Activated CD8-positive, alpha-beta memory T cell treated with anti-CD3 and anti-CD28 coated beads, Interleukin-2, amount 10 ng/mL, durations not matched to agents 7 days and 5 days (primary cell): ENCODE measurements at regions of chr12 and their contacts with region 1.

Region 1: DNA sequence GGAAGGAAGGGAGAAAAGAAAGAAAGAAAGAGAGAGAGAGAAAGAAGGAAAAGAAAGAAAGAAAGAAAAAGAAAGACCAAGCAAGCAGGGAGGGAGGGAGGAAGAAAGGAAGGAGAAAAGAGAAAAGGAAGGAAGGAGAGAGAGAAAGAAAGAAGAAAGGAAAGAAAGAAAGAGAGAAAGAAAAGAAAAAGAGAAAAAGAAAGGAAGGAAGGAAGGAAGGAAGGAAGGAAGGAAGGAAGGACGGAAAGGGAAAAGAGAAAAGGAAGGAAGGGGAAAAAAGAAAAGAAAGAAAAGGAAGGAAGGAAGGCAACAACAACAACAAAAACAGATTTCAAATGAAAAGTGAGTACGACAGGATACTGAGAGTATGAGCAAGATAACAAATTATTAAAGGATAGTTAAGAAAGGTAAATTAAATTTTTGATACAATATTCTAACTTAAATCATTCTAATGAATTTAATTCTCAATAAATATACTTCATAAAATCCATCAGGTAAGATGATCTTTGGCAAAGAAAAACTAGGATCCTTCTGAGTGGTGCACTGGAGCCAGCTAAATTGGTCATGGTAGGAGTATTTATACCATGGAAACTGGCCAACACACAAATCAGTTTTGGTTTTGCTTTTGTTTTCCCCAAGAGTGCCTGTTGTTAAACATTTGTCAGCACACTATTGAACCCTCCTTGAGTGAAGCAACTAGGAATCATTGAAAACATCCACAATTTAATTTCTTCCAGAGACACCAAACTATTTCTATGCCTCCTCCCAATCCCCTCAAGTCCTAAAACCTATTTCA is 56.1 kb upstream of the DYRK2 start:
- DNase-seq: peak; percentile 45
- ATAC-seq: peak; percentile 92
- H3K4me3 Mint-ChIP-seq: peak overlapping the region; percentile 20
- H3K27ac Mint-ChIP-seq: peak overlapping the region; percentile 85
- H3K4me1 Mint-ChIP-seq: peaks cover 34% of the 10 kb centered on the region
- H3K27me3 Mint-ChIP-seq: no peaks in the 10 kb centered on the region

Region 2: GRCh38 chr12:67630373-67631088 is 38.1 kb after region 1 on chr12:
- CTCF ChIA-PET with region 1: interaction called, 10 read pairs
- DNase-seq: peak; percentile 95
- ATAC-seq: peak; percentile 99
- H3K4me3 Mint-ChIP-seq: peak overlapping the region; percentile 35
- H3K27ac Mint-ChIP-seq: peak overlapping the region; percentile 81
- H3K4me1 Mint-ChIP-seq: peaks cover 38% of the 10 kb centered on the region
- H3K27me3 Mint-ChIP-seq: peaks cover 11% of the 10 kb centered on the region